ENCODE measurements at regions of chr1 and their contacts with region 1.

Region 1: DNA sequence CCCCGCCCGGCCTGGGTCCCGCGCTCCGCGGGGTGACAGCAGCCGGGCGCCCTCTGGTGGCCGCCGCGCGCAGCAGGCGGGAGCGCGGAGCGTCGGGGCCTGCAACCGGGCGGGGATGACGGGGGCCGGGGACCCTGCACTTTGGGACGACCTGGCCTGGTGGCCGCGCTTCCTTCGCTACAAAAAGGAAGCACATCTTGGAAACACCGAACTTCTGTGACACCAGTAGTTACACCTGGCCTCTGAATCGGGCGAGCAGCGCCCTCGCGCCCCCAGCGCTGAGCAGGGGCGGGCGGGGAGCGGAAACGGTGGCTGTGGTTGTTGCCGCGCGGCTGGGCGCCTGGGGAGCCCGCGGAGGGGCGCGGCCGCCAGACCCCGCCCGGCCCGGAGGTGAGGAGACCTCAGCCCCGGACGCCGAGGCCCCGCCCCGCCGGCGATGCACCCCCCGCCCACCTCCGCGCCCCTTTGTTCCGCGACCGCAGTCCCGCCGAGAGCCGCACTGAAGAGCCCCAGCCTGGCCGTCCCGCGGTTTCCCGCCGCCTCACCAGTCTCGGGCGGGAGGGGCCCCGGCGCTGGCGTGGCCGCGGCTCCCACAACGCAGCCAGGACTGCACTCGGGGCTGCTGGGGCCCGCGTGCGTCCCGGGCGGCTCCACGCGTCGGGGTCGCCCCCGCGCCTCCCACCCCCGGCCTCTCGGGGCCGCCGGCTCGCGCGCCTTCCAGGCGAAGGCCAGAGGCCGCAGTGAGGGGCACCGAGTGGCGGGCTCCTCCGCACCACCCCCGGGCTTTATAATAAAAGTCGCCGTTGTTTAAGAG is 59.3 kb downstream of the H3-3A start:
- DNase-seq: no peak
- H3K4me3 ChIP-seq: peak overlapping the region; percentile 69
- H3K27me3 ChIP-seq: peaks cover 2% of the 10 kb centered on the region; the same call in 1 of the 2 replicates
- CTCF ChIP-seq: peak; percentile 41

Region 2: GRCh38 chr1:225881969-225882693 is 239.7 kb before region 1 on chr1 and contains the start of gene TMEM63A:
- CTCF ChIA-PET with region 1: no interaction called
- POLR2A ChIA-PET with region 1: no interaction called
- DNase-seq: no peak
- H3K4me3 ChIP-seq: peak within 1 kb of the TSS; percentile 57
- H3K27me3 ChIP-seq: no peaks in the 10 kb centered on the region
- CTCF ChIP-seq: peak; percentile 46
- polyA plus RNA-seq, gene TMEM63A: 25.3 and 41.8 TPM in 2 replicates

Region 3: GRCh38 chr1:226062558-226063223 is 59.1 kb before region 1 on chr1 and contains the start of gene H3-3A:
- CTCF ChIA-PET with region 1: interaction called, 52 read pairs
- POLR2A ChIA-PET with region 1: interaction called, 3 read pairs
- DNase-seq: peak; percentile 43
- H3K4me3 ChIP-seq: peak within 1 kb of the TSS; percentile 70
- H3K27me3 ChIP-seq: no peaks in the 10 kb centered on the region
- CTCF ChIP-seq: no peak
- polyA plus RNA-seq, gene H3-3A: 164 and 168 TPM in 2 replicates

Region 4: GRCh38 chr1:226095286-226095685 is 26.5 kb before region 1 on chr1:
- CTCF ChIA-PET with region 1: no interaction called
- POLR2A ChIA-PET with region 1: no interaction called
- DNase-seq: no peak
- H3K4me3 ChIP-seq: no peak overlapping the region
- H3K27me3 ChIP-seq: no peaks in the 10 kb centered on the region
- CTCF ChIP-seq: no peak

Region 5: DNA sequence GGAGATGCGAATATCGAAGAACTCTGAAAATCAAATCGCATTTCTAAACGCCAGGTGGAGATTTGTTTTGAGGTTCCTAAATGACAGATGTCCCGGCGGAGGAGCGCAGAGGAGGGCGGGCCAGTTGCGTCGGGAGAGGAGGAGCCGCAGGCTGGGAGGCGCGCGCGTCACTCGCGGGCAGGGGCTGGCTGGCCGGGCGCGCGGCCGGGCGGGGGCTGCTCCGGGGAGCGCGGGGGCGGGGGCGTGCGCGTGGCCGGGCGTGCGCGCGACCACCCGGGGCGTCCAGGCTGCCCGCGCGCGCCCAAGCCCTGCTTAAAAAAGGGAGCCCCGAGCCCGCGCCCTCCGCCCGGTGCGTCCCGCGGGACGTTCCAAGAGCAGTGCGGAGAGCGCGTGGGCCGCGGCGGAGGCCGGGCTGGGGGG is 12.0 kb before region 1 on chr1:
- CTCF ChIA-PET with region 1: interaction called, 42 read pairs
- POLR2A ChIA-PET with region 1: interaction called, 4 read pairs
- DNase-seq: no peak
- H3K4me3 ChIP-seq: peak overlapping the region; percentile 54
- H3K27me3 ChIP-seq: no peaks in the 10 kb centered on the region
- CTCF ChIP-seq: no peak

Region 6: GRCh38 chr1:226135059-226135651 is 13.4 kb after region 1 on chr1:
- CTCF ChIA-PET with region 1: interaction called, 35 read pairs
- POLR2A ChIA-PET with region 1: no interaction called
- DNase-seq: no peak
- H3K4me3 ChIP-seq: no peak overlapping the region
- H3K27me3 ChIP-seq: 0 out of 2 replicates have a peak, but pooled peaks cover 2% of the 10 kb centered on the region
- CTCF ChIP-seq: no peak

Region 7: DNA sequence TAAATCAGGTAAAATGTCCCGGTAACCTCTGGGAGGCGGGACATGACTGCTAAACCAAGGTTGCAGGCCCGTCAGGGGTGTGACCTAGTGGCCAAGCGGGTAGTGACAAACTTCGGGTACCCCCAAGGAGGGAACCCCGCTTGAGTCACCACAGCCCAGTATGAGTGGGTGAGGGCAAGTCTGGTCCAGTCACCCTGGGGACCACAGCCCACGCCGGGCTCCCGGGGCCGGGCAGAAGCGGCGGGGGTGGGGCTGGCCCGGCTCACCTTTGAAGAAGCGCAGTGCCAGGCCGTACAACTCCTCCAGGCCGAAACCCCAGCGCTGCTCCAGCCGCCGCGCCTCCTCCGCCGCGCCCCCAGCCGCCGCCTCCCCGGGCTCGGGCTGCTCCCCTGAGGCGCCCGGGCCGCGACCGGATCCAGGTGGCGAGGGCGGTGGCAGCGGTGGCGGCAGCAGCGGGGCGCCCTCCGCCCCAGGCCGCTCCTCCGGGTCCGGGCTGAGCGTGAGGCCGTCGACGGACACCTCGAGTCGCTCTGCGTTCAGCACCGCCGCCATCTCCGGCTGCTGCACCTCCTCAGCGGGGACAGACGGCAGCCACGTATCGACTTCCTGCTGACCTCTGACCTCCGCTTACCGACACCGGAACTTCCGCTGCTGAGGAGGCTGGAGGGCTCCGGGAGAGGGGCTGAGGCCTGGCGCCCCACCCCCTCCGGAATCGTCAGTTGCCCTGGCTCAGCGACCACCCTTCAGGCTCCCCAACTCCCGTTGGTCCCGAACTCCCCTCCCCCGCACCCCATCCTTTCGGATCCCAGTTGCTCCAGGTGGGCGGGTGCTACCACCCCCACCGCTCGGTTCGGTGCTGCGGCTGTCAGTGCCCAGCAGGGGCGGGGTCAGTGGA is 64.6 kb after region 1 on chr1 and contains the start of gene ACBD3:
- CTCF ChIA-PET with region 1: interaction called, 25 read pairs
- POLR2A ChIA-PET with region 1: no interaction called
- DNase-seq: peak; percentile 28
- H3K4me3 ChIP-seq: peak within 1 kb of the TSS; percentile 85
- H3K27me3 ChIP-seq: no peaks in the 10 kb centered on the region
- CTCF ChIP-seq: no peak
- polyA plus RNA-seq, gene ACBD3: 22.8 and 39.5 TPM in 2 replicates

Region 8: GRCh38 chr1:226201029-226201593 is 79.3 kb after region 1 on chr1:
- CTCF ChIA-PET with region 1: interaction called, 198 read pairs
- POLR2A ChIA-PET with region 1: no interaction called
- DNase-seq: no peak
- H3K4me3 ChIP-seq: no peak overlapping the region
- H3K27me3 ChIP-seq: no peaks in the 10 kb centered on the region; the same call in 1 of the 2 replicates
- CTCF ChIP-seq: peak; percentile 54

Region 9: GRCh38 chr1:226332947-226333346 is 211.2 kb after region 1 on chr1:
- CTCF ChIA-PET with region 1: interaction called, 19 read pairs
- POLR2A ChIA-PET with region 1: no interaction called
- DNase-seq: no peak
- H3K4me3 ChIP-seq: no peak overlapping the region
- H3K27me3 ChIP-seq: no peaks in the 10 kb centered on the region
- CTCF ChIP-seq: no peak